GM12878 (cell line): ENCODE measurements at regions of chr1 and their contacts with region 1.

Region 1: GRCh38 chr1:56584910-56585528 is 5.7 kb upstream of the PLPP3 start:
- DNase-seq: no peak
- ATAC-seq: peak; percentile 71
- H3K4me3 ChIP-seq: no peak overlapping the region
- H3K27ac ChIP-seq: no peak overlapping the region
- H3K4me1 ChIP-seq: no peaks in the 10 kb centered on the region
- H3K27me3 ChIP-seq: no peaks in the 10 kb centered on the region
- CTCF ChIP-seq: peak; percentile 71 to 82 (median 78)
- EP300 ChIP-seq: no peak
- POLR2A ChIP-seq: no peak
- RAD21 ChIP-seq: peak; percentile 95

Region 2: DNA sequence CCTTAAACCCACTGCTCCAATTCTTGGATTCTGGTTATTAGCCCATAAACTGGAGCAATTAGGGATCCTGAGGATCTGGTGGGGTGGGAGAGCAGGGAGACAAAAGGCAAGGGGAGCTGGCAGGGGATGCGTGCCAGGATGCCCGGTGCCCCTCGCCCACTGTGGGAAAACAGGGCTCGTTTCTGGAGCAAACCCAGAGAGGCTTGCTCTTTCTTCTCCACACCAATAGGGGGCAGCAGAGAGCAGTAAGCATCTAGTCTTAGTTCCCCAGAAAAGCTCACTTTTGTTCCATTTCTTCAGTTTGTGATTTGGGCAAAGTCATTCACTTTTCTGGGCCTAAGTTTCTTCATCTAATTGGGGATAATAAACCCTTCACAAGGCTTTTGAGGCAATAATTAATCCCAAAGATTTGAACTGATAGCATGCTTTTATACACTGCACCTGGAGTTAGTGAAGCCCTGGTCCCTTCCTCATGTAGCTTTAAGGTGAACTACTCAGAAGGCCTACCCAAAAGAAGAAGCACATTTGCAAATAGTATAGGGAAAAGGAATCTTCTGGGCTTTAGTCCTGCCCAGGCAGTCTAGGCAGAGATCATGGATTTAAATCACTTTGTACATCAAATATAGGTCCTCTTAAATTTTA is 1209.3 kb before region 1 on chr1:
- CTCF ChIA-PET with region 1: interaction called, 72 read pairs
- POLR2A ChIA-PET with region 1: interaction called, 3 read pairs
- RAD21 ChIA-PET with region 1: interaction called, 50 read pairs
- SMC1A ChIA-PET with region 1: interaction called, 58 read pairs
- in situ Hi-C with region 1: loop called (anchors 10 kb)
- intact Hi-C with region 1: loop called (anchors 2 kb)
- DNase-seq: no peak
- ATAC-seq: peak; percentile 80
- H3K4me3 ChIP-seq: no peak overlapping the region
- H3K27ac ChIP-seq: no peak overlapping the region
- H3K4me1 ChIP-seq: no peaks in the 10 kb centered on the region
- H3K27me3 ChIP-seq: no peaks in the 10 kb centered on the region; a peak in 2 of 4 replicates
- CTCF ChIP-seq: peak; percentile 71 to 90 (median 89)
- EP300 ChIP-seq: no peak
- POLR2A ChIP-seq: no peak
- RAD21 ChIP-seq: peak; percentile 63

Region 3: GRCh38 chr1:55893155-55893554 is 691.9 kb before region 1 on chr1:
- CTCF ChIA-PET with region 1: interaction called, 4 read pairs
- POLR2A ChIA-PET with region 1: no interaction called
- RAD21 ChIA-PET with region 1: interaction called, 4 read pairs
- SMC1A ChIA-PET with region 1: interaction called, 3 read pairs
- in situ Hi-C with region 1: no loop called
- intact Hi-C with region 1: loop called (anchors 10 kb)
- DNase-seq: no peak
- ATAC-seq: peak; percentile 78
- H3K4me3 ChIP-seq: no peak overlapping the region
- H3K27ac ChIP-seq: no peak overlapping the region
- H3K4me1 ChIP-seq: no peaks in the 10 kb centered on the region
- H3K27me3 ChIP-seq: no peaks in the 10 kb centered on the region; a peak in 1 of 4 replicates
- CTCF ChIP-seq: peak; percentile 32 to 44 (median 36)
- EP300 ChIP-seq: no peak
- POLR2A ChIP-seq: no peak
- RAD21 ChIP-seq: peak; percentile 48; the same call in 1 of the 2 replicates

Region 4: GRCh38 chr1:56291374-56291919 is 293.6 kb before region 1 on chr1:
- CTCF ChIA-PET with region 1: interaction called, 10 read pairs
- POLR2A ChIA-PET with region 1: no interaction called
- RAD21 ChIA-PET with region 1: interaction called, 9 read pairs
- SMC1A ChIA-PET with region 1: interaction called, 3 read pairs
- in situ Hi-C with region 1: no loop called
- intact Hi-C with region 1: no loop called
- DNase-seq: no peak
- ATAC-seq: no peak
- H3K4me3 ChIP-seq: no peak overlapping the region
- H3K27ac ChIP-seq: no peak overlapping the region
- H3K4me1 ChIP-seq: no peaks in the 10 kb centered on the region
- H3K27me3 ChIP-seq: no peaks in the 10 kb centered on the region
- CTCF ChIP-seq: no peak
- EP300 ChIP-seq: no peak
- POLR2A ChIP-seq: no peak
- RAD21 ChIP-seq: no peak

Region 5: GRCh38 chr1:56525489-56526041 is 59.5 kb before region 1 on chr1:
- CTCF ChIA-PET with region 1: interaction called, 116 read pairs
- POLR2A ChIA-PET with region 1: no interaction called
- RAD21 ChIA-PET with region 1: interaction called, 174 read pairs
- SMC1A ChIA-PET with region 1: interaction called, 80 read pairs
- in situ Hi-C with region 1: no loop called
- intact Hi-C with region 1: no loop called
- DNase-seq: peak; percentile 79
- ATAC-seq: peak; percentile 90
- H3K4me3 ChIP-seq: no peak overlapping the region
- H3K27ac ChIP-seq: peak overlapping the region; percentile 53; the same call in 1 of the 2 replicates
- H3K4me1 ChIP-seq: peaks cover 42% of the 10 kb centered on the region
- H3K27me3 ChIP-seq: no peaks in the 10 kb centered on the region
- CTCF ChIP-seq: no peak
- EP300 ChIP-seq: peak; percentile 79 to 92
- POLR2A ChIP-seq: no peak
- RAD21 ChIP-seq: no peak

Region 6: DNA sequence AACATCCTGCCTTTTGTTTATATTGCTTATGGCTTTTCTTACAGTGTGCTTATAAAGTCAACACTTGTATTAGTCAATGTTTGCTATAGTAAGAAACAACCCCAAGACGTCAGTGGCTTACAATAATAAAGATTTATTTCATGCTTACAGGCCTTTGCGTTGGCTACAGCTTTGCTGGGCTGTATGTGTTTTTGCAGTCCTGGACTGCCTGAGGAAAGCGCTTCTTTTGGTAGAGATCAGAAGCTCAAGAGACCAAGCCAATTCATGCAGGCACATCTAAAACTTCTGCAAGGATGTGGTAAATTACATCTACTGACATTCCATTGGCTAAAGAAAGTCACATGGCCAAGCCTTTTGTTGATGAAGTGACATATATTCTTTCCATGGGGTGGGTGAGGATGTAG is 42.6 kb after region 1 on chr1:
- CTCF ChIA-PET with region 1: no interaction called
- POLR2A ChIA-PET with region 1: no interaction called
- RAD21 ChIA-PET with region 1: no interaction called
- SMC1A ChIA-PET with region 1: no interaction called
- in situ Hi-C with region 1: no loop called
- intact Hi-C with region 1: no loop called
- DNase-seq: no peak
- ATAC-seq: no peak
- H3K4me3 ChIP-seq: no peak overlapping the region
- H3K27ac ChIP-seq: no peak overlapping the region
- H3K4me1 ChIP-seq: no peaks in the 10 kb centered on the region
- H3K27me3 ChIP-seq: no peaks in the 10 kb centered on the region
- CTCF ChIP-seq: no peak
- EP300 ChIP-seq: no peak
- POLR2A ChIP-seq: no peak
- RAD21 ChIP-seq: no peak

Region 7: DNA sequence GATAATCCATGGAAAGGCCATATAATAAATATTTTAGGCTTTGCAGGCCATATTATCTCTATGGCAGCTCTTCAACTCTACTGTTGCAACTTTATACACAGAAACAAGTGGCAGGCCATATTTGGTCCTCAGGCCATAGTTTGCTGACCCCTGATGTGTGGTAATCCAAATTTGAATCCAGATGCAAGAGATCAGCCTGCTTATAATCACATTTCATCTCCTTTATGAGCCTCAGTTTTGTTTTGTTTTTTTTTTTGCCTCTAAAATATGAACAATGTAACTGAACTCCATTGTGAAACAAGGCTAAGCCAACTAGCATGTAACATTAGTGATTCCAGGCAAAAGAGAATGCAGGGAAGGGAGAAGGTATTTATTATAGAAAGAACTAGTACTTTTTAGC is 141.7 kb after region 1 on chr1:
- CTCF ChIA-PET with region 1: no interaction called
- POLR2A ChIA-PET with region 1: no interaction called
- RAD21 ChIA-PET with region 1: no interaction called
- SMC1A ChIA-PET with region 1: no interaction called
- in situ Hi-C with region 1: no loop called
- intact Hi-C with region 1: no loop called
- DNase-seq: no peak
- ATAC-seq: no peak
- H3K4me3 ChIP-seq: no peak overlapping the region
- H3K27ac ChIP-seq: no peak overlapping the region
- H3K4me1 ChIP-seq: no peaks in the 10 kb centered on the region
- H3K27me3 ChIP-seq: no peaks in the 10 kb centered on the region
- CTCF ChIP-seq: no peak
- EP300 ChIP-seq: no peak
- POLR2A ChIP-seq: no peak
- RAD21 ChIP-seq: no peak

Region 8: GRCh38 chr1:56821140-56821797 is 236.2 kb after region 1 on chr1:
- CTCF ChIA-PET with region 1: interaction called, 15 read pairs
- POLR2A ChIA-PET with region 1: no interaction called
- RAD21 ChIA-PET with region 1: interaction called, 11 read pairs
- SMC1A ChIA-PET with region 1: interaction called, 6 read pairs
- in situ Hi-C with region 1: no loop called
- intact Hi-C with region 1: loop called (anchors 5 kb)
- DNase-seq: no peak
- ATAC-seq: peak; percentile 82
- H3K4me3 ChIP-seq: no peak overlapping the region
- H3K27ac ChIP-seq: no peak overlapping the region
- H3K4me1 ChIP-seq: no peaks in the 10 kb centered on the region
- H3K27me3 ChIP-seq: peaks cover 0 to 1% of the 10 kb centered on the region in 2 experiments; a peak in 2 of 4 replicates
- CTCF ChIP-seq: peak; percentile 68 to 95 (median 95)
- EP300 ChIP-seq: no peak
- POLR2A ChIP-seq: no peak
- RAD21 ChIP-seq: peak; percentile 76

Region 9: GRCh38 chr1:56866656-56867055 is 281.6 kb after region 1 on chr1:
- CTCF ChIA-PET with region 1: no interaction called
- POLR2A ChIA-PET with region 1: no interaction called
- RAD21 ChIA-PET with region 1: no interaction called
- SMC1A ChIA-PET with region 1: no interaction called
- in situ Hi-C with region 1: no loop called
- intact Hi-C with region 1: no loop called
- DNase-seq: no peak
- ATAC-seq: no peak
- H3K4me3 ChIP-seq: no peak overlapping the region
- H3K27ac ChIP-seq: no peak overlapping the region
- H3K4me1 ChIP-seq: no peaks in the 10 kb centered on the region
- H3K27me3 ChIP-seq: no peaks in the 10 kb centered on the region; a peak in 1 of 4 replicates
- CTCF ChIP-seq: no peak
- EP300 ChIP-seq: no peak
- POLR2A ChIP-seq: no peak
- RAD21 ChIP-seq: no peak

Region 10: GRCh38 chr1:56901716-56902115 is 316.7 kb after region 1 on chr1:
- CTCF ChIA-PET with region 1: no interaction called
- POLR2A ChIA-PET with region 1: no interaction called
- RAD21 ChIA-PET with region 1: no interaction called
- SMC1A ChIA-PET with region 1: no interaction called
- in situ Hi-C with region 1: no loop called
- intact Hi-C with region 1: no loop called
- DNase-seq: no peak
- ATAC-seq: no peak
- H3K4me3 ChIP-seq: no peak overlapping the region
- H3K27ac ChIP-seq: no peak overlapping the region
- H3K4me1 ChIP-seq: no peaks in the 10 kb centered on the region
- H3K27me3 ChIP-seq: no peaks in the 10 kb centered on the region
- CTCF ChIP-seq: no peak
- EP300 ChIP-seq: no peak
- POLR2A ChIP-seq: no peak
- RAD21 ChIP-seq: no peak